GM12878 (cell line): ENCODE measurements at regions of chr4 and their contacts with region 1.

Region 1: DNA sequence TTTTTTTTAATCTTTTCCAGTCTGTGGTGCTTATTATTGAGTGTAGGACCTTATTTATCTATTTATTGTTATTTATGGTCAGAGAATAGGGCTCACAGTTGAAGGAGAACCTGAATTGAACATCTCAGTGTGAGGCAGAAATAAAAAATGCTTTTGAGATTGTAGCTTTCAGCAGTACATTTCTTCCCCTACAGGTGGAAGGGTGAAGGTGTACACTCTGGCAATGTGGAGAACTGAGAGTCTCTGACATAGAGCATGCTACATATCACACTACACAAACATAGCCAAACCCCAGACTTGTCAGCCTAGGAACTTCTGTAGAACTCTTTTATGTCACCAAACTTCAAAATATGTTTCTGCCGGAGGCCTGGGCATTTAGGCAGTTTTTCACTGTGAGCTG is 140.2 kb downstream of the STIM2 start:
- DNase-seq: no peak
- ATAC-seq: peak; percentile 98
- H3K4me3 ChIP-seq: no peak overlapping the region
- H3K27ac ChIP-seq: no peak overlapping the region
- H3K4me1 ChIP-seq: peaks cover 6% of the 10 kb centered on the region; the same call in 1 of the 2 replicates
- H3K27me3 ChIP-seq: no peaks in the 10 kb centered on the region
- CTCF ChIP-seq: peak; percentile 51 to 64 (median 55)
- EP300 ChIP-seq: no peak
- POLR2A ChIP-seq: no peak
- RAD21 ChIP-seq: peak; percentile 82

Region 2: DNA sequence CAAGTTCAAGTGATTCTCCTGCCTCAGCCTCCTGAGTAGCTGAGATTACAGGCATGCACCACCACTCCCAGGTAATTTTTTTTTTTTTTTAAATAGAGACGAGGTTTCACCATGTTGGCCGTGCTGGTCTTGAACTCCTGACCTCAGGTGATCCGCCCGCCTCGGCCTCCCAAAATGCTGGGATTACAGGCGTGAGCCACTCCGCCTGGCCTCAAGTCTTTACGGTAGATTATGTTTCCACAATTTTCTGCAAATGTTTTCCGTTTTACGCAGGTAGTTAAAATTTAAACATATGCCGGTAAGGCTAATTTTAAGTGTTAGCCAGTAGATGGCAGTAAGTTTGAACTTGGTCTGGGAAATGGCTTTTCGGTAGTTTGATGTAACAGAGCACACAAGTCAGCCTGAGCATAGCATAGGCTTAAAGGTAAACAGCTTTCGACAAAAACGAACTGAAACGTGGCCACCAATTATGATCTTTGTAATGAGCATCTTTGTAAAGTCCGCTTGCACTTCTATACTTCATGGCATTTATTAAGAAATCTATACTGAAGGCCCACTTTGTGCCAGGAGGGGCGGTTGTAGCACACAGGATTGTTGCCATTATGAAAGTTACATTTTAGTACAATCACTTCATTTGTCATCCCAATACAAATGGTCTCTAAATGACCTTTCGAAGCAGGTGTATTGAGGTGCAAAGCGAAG is 541.6 kb before region 1 on chr4:
- CTCF ChIA-PET with region 1: interaction called, 78 read pairs
- POLR2A ChIA-PET with region 1: no interaction called
- RAD21 ChIA-PET with region 1: no interaction called
- SMC1A ChIA-PET with region 1: no interaction called
- in situ Hi-C with region 1: loop called (anchors 5 kb)
- intact Hi-C with region 1: no loop called
- DNase-seq: peak; percentile 26
- ATAC-seq: peak; percentile 90
- H3K4me3 ChIP-seq: no peak overlapping the region
- H3K27ac ChIP-seq: no peak overlapping the region
- H3K4me1 ChIP-seq: no peaks in the 10 kb centered on the region; the same call in 1 of the 2 replicates
- H3K27me3 ChIP-seq: no peaks in the 10 kb centered on the region
- CTCF ChIP-seq: peak; percentile 53 to 65 (median 59); a peak in 5 of 6 replicates
- EP300 ChIP-seq: no peak
- POLR2A ChIP-seq: no peak
- RAD21 ChIP-seq: peak; percentile 76

Region 3: GRCh38 chr4:26985873-26986272 is 14.9 kb before region 1 on chr4:
- CTCF ChIA-PET with region 1: interaction called, 6 read pairs
- POLR2A ChIA-PET with region 1: no interaction called
- RAD21 ChIA-PET with region 1: interaction called, 3 read pairs
- SMC1A ChIA-PET with region 1: interaction called, 13 read pairs
- in situ Hi-C with region 1: no loop called
- intact Hi-C with region 1: no loop called
- DNase-seq: peak; percentile 44
- ATAC-seq: peak; percentile 96
- H3K4me3 ChIP-seq: no peak overlapping the region
- H3K27ac ChIP-seq: no peak overlapping the region
- H3K4me1 ChIP-seq: peaks cover 14% of the 10 kb centered on the region
- H3K27me3 ChIP-seq: no peaks in the 10 kb centered on the region
- CTCF ChIP-seq: no peak
- EP300 ChIP-seq: 0 out of 4 replicates have a peak, but pooled peaks of 1 of the 2 experiments have one; percentile 21
- POLR2A ChIP-seq: no peak
- RAD21 ChIP-seq: no peak

Region 4: GRCh38 chr4:27016551-27016950 is 15.7 kb after region 1 on chr4:
- CTCF ChIA-PET with region 1: no interaction called
- POLR2A ChIA-PET with region 1: no interaction called
- RAD21 ChIA-PET with region 1: no interaction called
- SMC1A ChIA-PET with region 1: no interaction called
- in situ Hi-C with region 1: no loop called
- intact Hi-C with region 1: no loop called
- DNase-seq: no peak
- ATAC-seq: no peak
- H3K4me3 ChIP-seq: no peak overlapping the region
- H3K27ac ChIP-seq: no peak overlapping the region
- H3K4me1 ChIP-seq: no peaks in the 10 kb centered on the region
- H3K27me3 ChIP-seq: no peaks in the 10 kb centered on the region
- CTCF ChIP-seq: no peak
- EP300 ChIP-seq: no peak
- POLR2A ChIP-seq: no peak
- RAD21 ChIP-seq: no peak